ENCODE measurements at regions of chr17 and their contacts with region 1.

Region 1: GRCh38 chr17:18937981-18938691 is 13.8 kb upstream of the SLC5A10 start:
- DNase-seq: peak; percentile 12
- ATAC-seq: peak; percentile 24; the same call in 1 of the 2 replicates
- H3K4me3 ChIP-seq: no peak overlapping the region
- H3K27ac ChIP-seq: no peak overlapping the region
- H3K4me1 ChIP-seq: no peaks in the 10 kb centered on the region
- H3K27me3 ChIP-seq: peaks cover 2% of the 10 kb centered on the region
- CTCF ChIP-seq: no peak
- POLR2A ChIP-seq: no peak
- RAD21 ChIP-seq: no peak

Region 2: GRCh38 chr17:18855831-18856569 is 82.1 kb before region 1 on chr17:
- CTCF ChIA-PET with region 1: no interaction called
- POLR2A ChIA-PET with region 1: no interaction called
- dilution Hi-C with region 1: no loop called
- in situ Hi-C with region 1: no loop called
- intact Hi-C with region 1: loop called (anchors 5 kb)
- DNase-seq: peak; percentile 95
- ATAC-seq: peak; percentile 92
- H3K4me3 ChIP-seq: peak overlapping the region; percentile 69
- H3K27ac ChIP-seq: peak overlapping the region; percentile 50
- H3K4me1 ChIP-seq: peaks cover 4% of the 10 kb centered on the region; the same call in 1 of the 2 replicates
- H3K27me3 ChIP-seq: no peaks in the 10 kb centered on the region
- CTCF ChIP-seq: no peak
- POLR2A ChIP-seq: 0 out of 2 replicates have a peak, but pooled peaks have one; percentile 61
- RAD21 ChIP-seq: no peak

Region 3: DNA sequence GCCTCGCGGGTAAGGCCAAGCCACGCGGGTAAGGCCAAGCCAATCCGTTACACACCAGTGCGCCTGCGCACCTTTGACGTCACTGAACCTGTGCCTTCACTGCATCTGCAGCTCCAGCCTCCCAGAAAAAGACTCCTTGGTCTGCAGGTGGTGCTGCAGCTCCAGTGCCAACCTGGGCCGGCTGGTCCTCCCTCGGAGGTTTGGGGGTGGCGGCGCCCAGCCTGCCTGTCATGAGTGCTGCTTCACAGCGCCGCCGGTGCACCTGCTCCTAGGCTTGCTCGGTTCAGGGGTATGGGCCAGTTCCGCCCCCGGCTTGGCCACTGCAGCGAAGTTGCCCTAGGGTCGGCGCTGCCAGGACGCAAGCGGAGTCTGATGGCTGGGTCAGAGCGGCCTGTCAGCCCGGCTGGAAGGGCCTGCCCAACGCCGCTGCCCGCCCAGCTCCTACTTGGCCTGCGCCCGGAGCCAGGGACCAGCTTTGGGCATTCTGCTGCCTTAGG is 1958.1 kb after region 1 on chr17:
- CTCF ChIA-PET with region 1: no interaction called
- POLR2A ChIA-PET with region 1: no interaction called
- dilution Hi-C with region 1: no loop called
- in situ Hi-C with region 1: no loop called
- intact Hi-C with region 1: no loop called
- DNase-seq: peak; percentile 1
- ATAC-seq: no peak
- H3K4me3 ChIP-seq: no peak overlapping the region
- H3K27ac ChIP-seq: no peak overlapping the region
- H3K4me1 ChIP-seq: no peaks in the 10 kb centered on the region
- H3K27me3 ChIP-seq: no peaks in the 10 kb centered on the region
- CTCF ChIP-seq: 0 out of 2 replicates have a peak, but pooled peaks have one; percentile 9
- POLR2A ChIP-seq: no peak
- RAD21 ChIP-seq: peak; percentile 2; the same call in 1 of the 2 replicates